ENCODE measurements at regions of chr2 and their contacts with region 1.

Region 1: GRCh38 chr2:171086352-171087290 is 74.1 kb downstream of the TLK1 start:
- DNase-seq: peak; percentile 18
- CTCF ChIP-seq: peak; percentile 60

Region 2: GRCh38 chr2:171056307-171056706 is 30.3 kb before region 1 on chr2:
- CTCF ChIA-PET with region 1: interaction called, 10 read pairs
- POLR2A ChIA-PET with region 1: no interaction called
- DNase-seq: no peak
- CTCF ChIP-seq: no peak

Region 3: DNA sequence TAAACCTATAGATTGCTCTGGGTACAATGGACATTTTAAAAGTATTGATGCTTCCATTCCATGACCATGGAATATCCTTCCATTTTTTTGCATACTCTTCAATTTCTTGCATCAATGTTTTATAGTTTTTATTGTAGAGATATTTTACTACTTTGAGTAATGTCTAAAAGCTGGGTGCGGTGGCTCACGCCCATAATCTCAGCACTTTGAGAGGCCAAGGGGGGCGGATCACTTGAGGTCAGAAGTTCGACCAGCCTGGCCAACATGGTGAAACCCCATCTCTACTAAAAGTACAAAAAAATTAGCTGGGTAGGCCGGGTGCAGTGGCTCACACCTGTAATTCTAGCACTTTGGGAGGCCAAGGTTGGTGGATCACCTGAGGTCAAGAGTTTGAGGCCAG is 14.5 kb before region 1 on chr2:
- CTCF ChIA-PET with region 1: interaction called, 15 read pairs
- POLR2A ChIA-PET with region 1: no interaction called
- DNase-seq: no peak
- CTCF ChIP-seq: no peak

Region 4: DNA sequence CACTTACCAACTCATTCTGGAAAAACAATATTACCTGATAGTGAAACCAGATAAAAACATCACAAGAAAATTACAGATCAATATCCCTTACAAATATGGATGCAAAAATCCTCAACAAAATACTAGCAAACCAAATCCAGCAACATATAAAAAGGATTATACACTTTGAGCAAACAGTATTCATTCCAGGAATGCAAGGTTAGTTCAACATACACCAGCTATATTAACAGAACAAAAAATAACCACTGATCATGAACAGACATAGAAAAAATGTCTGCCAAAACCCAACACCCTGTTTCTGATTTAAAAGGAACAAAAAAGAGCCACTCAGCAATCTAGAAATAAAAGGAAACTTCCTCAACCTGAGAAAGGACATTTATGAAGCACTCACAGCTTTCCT is 12.0 kb after region 1 on chr2:
- CTCF ChIA-PET with region 1: interaction called, 23 read pairs
- POLR2A ChIA-PET with region 1: no interaction called
- DNase-seq: no peak
- CTCF ChIP-seq: no peak

Measured in GM10248 (cell line).